Left ventricle myocardium inferior (tissue), 1 donor: ENCODE measurements at regions of chr11 and their contacts with region 1.

Region 1: GRCh38 chr11:32374261-32374711 is 61.1 kb downstream of the WT1 start:
- DNase-seq: no peak
- H3K4me3 ChIP-seq: no peak overlapping the region
- H3K27ac ChIP-seq: no peak overlapping the region
- H3K4me1 ChIP-seq: no peaks in the 10 kb centered on the region
- H3K27me3 ChIP-seq: peaks cover 24% of the 10 kb centered on the region
- CTCF ChIP-seq: peak; percentile 61

Region 2: GRCh38 chr11:32323814-32324130 is 50.5 kb before region 1 on chr11:
- intact Hi-C with region 1: loop called (anchors 5 kb)
- DNase-seq: no peak
- H3K4me3 ChIP-seq: no peak overlapping the region
- H3K27ac ChIP-seq: no peak overlapping the region
- H3K4me1 ChIP-seq: no peaks in the 10 kb centered on the region
- H3K27me3 ChIP-seq: peaks cover 55% of the 10 kb centered on the region
- CTCF ChIP-seq: no peak